Cardiac septum (tissue), 1 donor: ENCODE measurements at regions of chr16 and their contacts with region 1.

Region 1: GRCh38 chr16:85717393-85718121 is 28.8 kb upstream of the GINS2 start:
- DNase-seq: peak; percentile 78

Region 2: DNA sequence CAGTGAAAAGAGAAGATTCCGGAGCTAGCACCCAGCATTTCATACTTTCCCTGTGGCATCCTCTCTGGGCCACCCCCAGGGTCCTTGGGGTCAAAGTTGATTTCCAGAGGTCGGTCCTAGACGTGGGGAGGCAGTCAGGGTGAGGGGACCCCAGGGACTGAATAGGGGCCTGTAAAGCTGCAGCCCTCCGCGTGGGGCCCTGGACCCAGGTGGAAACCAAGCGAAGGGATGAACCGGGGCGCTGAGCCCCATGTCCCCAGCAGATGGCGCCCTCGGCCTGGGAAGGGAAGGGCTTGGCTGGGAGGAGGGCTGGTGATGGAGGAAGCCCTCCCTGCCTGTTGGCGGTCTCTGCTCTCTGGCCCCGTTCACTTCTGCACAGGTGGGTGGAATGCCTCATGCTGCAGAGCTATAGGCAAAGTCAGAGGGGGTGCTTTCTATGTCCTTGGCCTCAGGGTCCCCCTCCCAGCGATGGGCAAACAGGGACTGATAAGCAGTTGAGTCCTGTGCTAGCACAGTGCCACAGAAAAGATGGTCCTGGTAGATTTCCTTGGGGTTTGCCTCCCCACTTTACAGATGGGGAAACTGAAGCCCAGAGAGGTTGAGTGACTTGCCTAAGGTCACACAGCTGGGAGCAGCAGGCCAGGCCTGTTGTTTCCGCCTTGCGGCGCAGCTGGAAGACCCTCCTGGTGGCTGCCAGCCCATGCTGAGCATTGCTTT is 441.9 kb before region 1 on chr16:
- intact Hi-C with region 1: loop called (anchors 10 kb)
- DNase-seq: peak; percentile 85

Region 3: DNA sequence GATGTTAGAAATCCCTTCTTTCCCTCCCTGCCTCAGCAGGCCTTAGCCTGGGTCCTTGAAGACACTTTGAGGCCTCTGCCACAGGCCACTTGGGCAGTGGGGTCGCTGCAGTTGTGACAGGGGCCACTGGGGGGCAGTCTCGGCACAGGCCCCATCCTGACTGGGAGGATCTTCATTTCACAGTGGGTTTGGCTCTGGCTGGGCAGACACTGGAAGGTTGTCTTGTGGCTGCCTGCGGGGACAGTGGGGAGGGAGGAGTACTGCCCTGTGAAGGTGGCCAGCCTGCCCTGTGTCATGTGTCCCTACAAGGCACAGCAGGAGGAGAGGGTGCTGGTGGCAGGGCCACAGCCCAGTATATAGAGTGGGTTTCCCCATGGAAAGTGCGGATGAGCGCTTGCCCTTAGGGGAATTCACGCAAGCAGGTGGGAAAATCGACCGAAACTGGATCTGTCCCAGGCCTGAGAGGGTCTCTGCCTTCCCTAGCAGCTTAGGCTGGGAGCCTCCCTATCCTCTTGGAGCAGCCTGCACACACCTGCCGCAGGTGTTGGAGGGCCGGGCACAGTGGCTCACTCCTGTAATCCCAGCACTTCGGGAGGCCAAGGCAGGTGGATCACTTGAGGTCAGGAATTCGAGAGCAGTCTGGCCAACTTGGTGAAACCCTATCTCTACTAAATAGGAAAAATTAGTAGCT is 57.6 kb before region 1 on chr16:
- intact Hi-C with region 1: loop called (anchors 2 kb)
- DNase-seq: peak; percentile 84

Region 4: DNA sequence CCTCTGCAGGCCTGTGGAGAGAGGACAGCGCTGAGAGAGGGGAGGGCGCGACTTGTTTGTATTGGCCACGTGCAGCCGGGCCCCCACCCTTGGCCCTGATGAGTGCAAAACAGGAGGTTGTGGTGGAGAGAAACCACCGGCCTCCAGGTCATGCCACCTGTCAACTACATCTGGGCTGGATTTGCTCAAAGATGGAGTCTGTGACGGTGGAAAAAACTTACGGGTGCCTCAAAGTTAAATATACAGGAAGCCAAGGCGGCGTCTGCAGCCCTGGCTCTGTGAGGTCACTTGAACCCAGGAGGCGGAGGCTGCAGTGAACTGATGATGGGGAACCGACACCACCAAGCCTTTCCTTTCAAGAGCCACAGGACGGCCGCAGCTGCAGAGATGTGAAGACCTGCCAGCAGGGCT is 17.7 kb after region 1 on chr16:
- intact Hi-C with region 1: no loop called
- DNase-seq: no peak

Region 5: DNA sequence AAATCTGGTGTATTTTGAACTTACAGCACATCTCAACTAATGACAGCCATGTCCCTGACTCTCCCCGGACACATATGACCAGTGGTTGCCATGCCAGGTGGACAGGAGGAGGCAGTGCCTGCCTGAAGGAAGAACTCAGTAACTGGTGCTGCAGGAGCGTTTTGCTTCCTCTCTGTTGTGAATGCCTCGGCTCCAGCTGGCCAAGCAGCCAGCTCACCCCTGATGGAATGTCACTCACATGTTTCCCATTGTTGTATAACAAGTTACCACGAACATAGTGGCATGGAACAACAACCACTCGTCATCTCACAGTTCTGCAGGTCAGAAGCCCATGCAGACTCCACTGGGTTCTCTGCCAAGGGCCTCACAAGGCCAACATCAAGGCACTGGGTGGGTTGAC is 161.3 kb after region 1 on chr16:
- intact Hi-C with region 1: no loop called
- DNase-seq: no peak

Region 6: DNA sequence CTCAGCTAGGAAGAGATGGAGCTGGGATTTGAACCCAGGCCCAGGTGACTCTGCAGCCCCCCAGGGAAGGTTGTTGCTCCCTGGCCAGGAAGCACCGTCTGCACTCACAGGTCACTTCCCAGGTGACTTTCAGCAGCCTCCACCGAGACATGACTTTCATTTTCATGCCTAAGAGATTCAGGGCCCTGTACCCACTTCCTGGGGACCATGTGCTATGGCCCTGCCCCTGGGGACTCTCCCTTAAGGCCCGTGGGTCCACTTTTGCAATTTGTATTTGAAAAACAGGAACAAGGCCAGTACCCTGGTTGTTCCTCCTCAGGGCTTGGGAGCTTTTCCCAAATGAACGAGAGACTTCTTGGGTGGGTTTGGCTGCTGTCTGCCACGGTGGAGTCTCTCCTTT is 372.4 kb after region 1 on chr16:
- intact Hi-C with region 1: no loop called
- DNase-seq: no peak